Caco-2 (cell line): ENCODE measurements at regions of chr12 and their contacts with region 1.

Region 1: DNA sequence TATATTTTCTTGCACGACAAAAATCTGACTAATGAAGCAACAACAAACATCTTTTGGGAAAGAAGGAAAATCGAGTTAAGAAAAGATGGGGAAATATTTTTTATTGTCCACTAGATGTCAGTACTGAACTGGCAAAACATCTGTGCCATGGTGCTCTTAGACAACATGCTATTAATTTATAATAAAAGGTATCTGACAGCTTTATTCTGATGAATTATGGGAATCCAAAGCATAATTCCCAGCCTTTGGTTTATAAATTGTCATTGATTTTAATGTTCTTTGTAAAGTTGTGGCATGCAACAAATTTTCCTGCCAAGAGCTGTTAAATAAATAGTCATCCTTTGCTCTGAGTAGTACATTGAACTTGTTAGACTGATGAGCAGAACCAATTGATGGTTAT is 231.2 kb downstream of the ETNK1 start:
- DNase-seq: no peak
- H3K4me3 ChIP-seq: no peak overlapping the region
- H3K4me3 Mint-ChIP-seq: no peak overlapping the region
- H3K27ac Mint-ChIP-seq: no peak overlapping the region
- H3K4me1 ChIP-seq: peaks cover 6% of the 10 kb centered on the region; the same call in 1 of the 2 replicates
- H3K4me1 Mint-ChIP-seq: peaks cover 16% of the 10 kb centered on the region
- H3K27me3 ChIP-seq: no peaks in the 10 kb centered on the region
- H3K27me3 Mint-ChIP-seq: peaks cover 15% of the 10 kb centered on the region
- CTCF ChIP-seq: peak; percentile 66 to 85

Region 2: GRCh38 chr12:22262309-22262708 is 593.9 kb before region 1 on chr12:
- CTCF ChIA-PET with region 1: no interaction called
- POLR2A ChIA-PET with region 1: no interaction called
- intact Hi-C with region 1: no loop called
- DNase-seq: no peak
- H3K4me3 ChIP-seq: no peak overlapping the region
- H3K4me3 Mint-ChIP-seq: no peak overlapping the region
- H3K27ac Mint-ChIP-seq: no peak overlapping the region
- H3K4me1 ChIP-seq: no peaks in the 10 kb centered on the region
- H3K4me1 Mint-ChIP-seq: no peaks in the 10 kb centered on the region
- H3K27me3 ChIP-seq: no peaks in the 10 kb centered on the region
- H3K27me3 Mint-ChIP-seq: peaks cover 18% of the 10 kb centered on the region
- CTCF ChIP-seq: no peak

Region 3: GRCh38 chr12:22684140-22685118 is 171.7 kb before region 1 on chr12:
- CTCF ChIA-PET with region 1: interaction called, 6 read pairs
- POLR2A ChIA-PET with region 1: no interaction called
- intact Hi-C with region 1: loop called (anchors 5 kb)
- DNase-seq: peak in 1 of 2 experiments; percentile 53
- H3K4me3 ChIP-seq: no peak overlapping the region
- H3K4me3 Mint-ChIP-seq: no peak overlapping the region
- H3K27ac Mint-ChIP-seq: no peak overlapping the region
- H3K4me1 ChIP-seq: no peaks in the 10 kb centered on the region
- H3K4me1 Mint-ChIP-seq: no peaks in the 10 kb centered on the region
- H3K27me3 ChIP-seq: no peaks in the 10 kb centered on the region
- H3K27me3 Mint-ChIP-seq: no peaks in the 10 kb centered on the region
- CTCF ChIP-seq: peak; percentile 70 to 77

Region 4: DNA sequence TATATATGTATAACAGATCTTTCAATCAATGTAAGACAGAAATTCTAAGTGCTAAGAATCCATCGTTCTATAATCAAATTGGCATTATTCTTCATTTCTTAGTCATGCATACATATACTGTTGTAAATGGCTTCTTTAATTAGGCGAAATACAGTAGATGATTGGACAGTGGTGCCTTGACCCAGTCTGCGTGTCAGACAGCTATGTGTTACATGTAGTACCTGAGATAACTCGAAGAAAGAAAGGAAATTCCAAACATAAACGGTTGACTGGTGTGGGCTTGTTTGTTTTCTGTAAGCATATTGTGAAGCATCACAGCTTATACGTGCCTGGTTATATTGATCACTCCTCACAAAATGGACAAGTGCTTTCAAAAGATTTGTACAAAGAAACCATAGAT is 20.7 kb before region 1 on chr12:
- CTCF ChIA-PET with region 1: no interaction called
- POLR2A ChIA-PET with region 1: interaction called, 14 read pairs
- intact Hi-C with region 1: no loop called
- DNase-seq: no peak
- H3K4me3 ChIP-seq: no peak overlapping the region
- H3K4me3 Mint-ChIP-seq: no peak overlapping the region
- H3K27ac Mint-ChIP-seq: no peak overlapping the region
- H3K4me1 ChIP-seq: no peaks in the 10 kb centered on the region
- H3K4me1 Mint-ChIP-seq: no peaks in the 10 kb centered on the region
- H3K27me3 ChIP-seq: no peaks in the 10 kb centered on the region; the same call in 1 of the 2 replicates
- H3K27me3 Mint-ChIP-seq: no peaks in the 10 kb centered on the region
- CTCF ChIP-seq: no peak

Region 5: DNA sequence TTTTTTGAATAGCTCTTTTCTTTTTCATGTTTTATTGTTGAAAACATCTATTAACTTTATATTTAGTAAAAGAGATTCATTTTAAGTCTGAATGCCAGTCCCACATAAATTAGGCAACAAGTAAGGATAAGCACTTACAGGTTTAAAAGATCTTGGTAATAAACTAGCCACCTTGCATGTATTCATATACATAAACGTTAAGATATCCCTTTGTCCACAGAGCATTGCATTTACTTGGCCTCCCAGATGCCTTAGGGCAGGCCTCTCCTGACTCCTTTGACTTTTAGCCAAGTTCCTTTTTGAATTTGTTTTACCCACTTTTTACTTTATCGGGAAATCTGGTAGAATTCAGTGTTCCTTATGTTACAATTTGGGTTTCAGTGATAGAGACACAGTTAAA is 100.5 kb after region 1 on chr12:
- CTCF ChIA-PET with region 1: no interaction called
- POLR2A ChIA-PET with region 1: no interaction called
- intact Hi-C with region 1: loop called (anchors 2 kb)
- DNase-seq: no peak
- H3K4me3 ChIP-seq: no peak overlapping the region
- H3K4me3 Mint-ChIP-seq: no peak overlapping the region
- H3K27ac Mint-ChIP-seq: no peak overlapping the region
- H3K4me1 ChIP-seq: no peaks in the 10 kb centered on the region
- H3K4me1 Mint-ChIP-seq: no peaks in the 10 kb centered on the region
- H3K27me3 ChIP-seq: no peaks in the 10 kb centered on the region
- H3K27me3 Mint-ChIP-seq: peaks cover 13% of the 10 kb centered on the region
- CTCF ChIP-seq: no peak

Region 6: DNA sequence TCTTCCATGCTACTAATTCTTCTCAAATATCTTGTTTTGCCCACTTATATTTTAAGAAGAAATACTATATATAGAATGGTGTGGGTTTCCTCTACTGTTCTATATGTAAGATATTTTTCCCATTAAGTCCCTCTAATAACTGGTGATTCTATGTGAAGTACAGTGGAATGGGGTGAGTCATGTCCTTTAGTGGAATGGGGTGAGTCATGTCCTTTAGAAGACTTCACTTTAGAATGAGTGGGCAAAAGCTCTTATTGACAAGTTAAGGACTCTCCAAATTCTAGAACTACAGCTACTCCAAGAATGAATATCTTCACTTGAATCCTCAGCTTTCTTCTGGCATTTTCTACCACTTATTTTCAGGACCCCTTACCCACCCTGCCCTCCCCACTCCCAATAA is 118.7 kb after region 1 on chr12:
- CTCF ChIA-PET with region 1: no interaction called
- POLR2A ChIA-PET with region 1: no interaction called
- intact Hi-C with region 1: no loop called
- DNase-seq: no peak
- H3K4me3 ChIP-seq: no peak overlapping the region
- H3K4me3 Mint-ChIP-seq: no peak overlapping the region
- H3K27ac Mint-ChIP-seq: no peak overlapping the region
- H3K4me1 ChIP-seq: no peaks in the 10 kb centered on the region
- H3K4me1 Mint-ChIP-seq: no peaks in the 10 kb centered on the region
- H3K27me3 ChIP-seq: no peaks in the 10 kb centered on the region
- H3K27me3 Mint-ChIP-seq: peaks cover 12% of the 10 kb centered on the region
- CTCF ChIP-seq: no peak

Region 7: DNA sequence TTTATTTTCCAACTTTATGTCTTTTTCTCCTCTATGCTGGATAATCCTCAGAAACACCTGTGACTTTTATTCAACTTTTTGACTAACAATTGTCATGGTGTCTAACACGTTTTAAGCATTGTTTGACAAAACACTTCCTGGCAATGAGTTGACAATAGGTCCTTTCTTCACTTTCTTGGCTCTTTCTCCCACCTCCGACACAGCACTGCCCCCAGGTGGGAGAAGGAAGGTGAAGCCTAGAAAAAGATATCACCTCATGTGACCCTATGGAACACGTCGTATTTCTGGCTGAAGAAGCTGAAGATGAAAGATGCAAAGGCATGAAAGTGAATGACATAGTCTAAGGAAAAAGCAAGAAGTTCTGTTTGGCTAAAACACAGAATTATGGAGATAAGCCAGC is 198.8 kb after region 1 on chr12:
- CTCF ChIA-PET with region 1: interaction called, 16 read pairs
- POLR2A ChIA-PET with region 1: no interaction called
- intact Hi-C with region 1: loop called (anchors 1 kb)
- DNase-seq: peak; percentile 50 to 69
- H3K4me3 ChIP-seq: no peak overlapping the region
- H3K4me3 Mint-ChIP-seq: no peak overlapping the region
- H3K27ac Mint-ChIP-seq: no peak overlapping the region
- H3K4me1 ChIP-seq: no peaks in the 10 kb centered on the region
- H3K4me1 Mint-ChIP-seq: no peaks in the 10 kb centered on the region
- H3K27me3 ChIP-seq: no peaks in the 10 kb centered on the region
- H3K27me3 Mint-ChIP-seq: peaks cover 2% of the 10 kb centered on the region
- CTCF ChIP-seq: peak; percentile 68 to 77

Region 8: GRCh38 chr12:23361971-23362370 is 505.8 kb after region 1 on chr12:
- CTCF ChIA-PET with region 1: no interaction called
- POLR2A ChIA-PET with region 1: no interaction called
- intact Hi-C with region 1: loop called (anchors 10 kb)
- DNase-seq: no peak
- H3K4me3 ChIP-seq: no peak overlapping the region
- H3K4me3 Mint-ChIP-seq: no peak overlapping the region
- H3K27ac Mint-ChIP-seq: no peak overlapping the region
- H3K4me1 ChIP-seq: no peaks in the 10 kb centered on the region
- H3K4me1 Mint-ChIP-seq: no peaks in the 10 kb centered on the region
- H3K27me3 ChIP-seq: no peaks in the 10 kb centered on the region
- H3K27me3 Mint-ChIP-seq: peaks cover 4% of the 10 kb centered on the region
- CTCF ChIP-seq: peak in 1 of 2 experiments; percentile 21